ENCODE measurements at regions of chr10 and their contacts with region 1.

Region 1: DNA sequence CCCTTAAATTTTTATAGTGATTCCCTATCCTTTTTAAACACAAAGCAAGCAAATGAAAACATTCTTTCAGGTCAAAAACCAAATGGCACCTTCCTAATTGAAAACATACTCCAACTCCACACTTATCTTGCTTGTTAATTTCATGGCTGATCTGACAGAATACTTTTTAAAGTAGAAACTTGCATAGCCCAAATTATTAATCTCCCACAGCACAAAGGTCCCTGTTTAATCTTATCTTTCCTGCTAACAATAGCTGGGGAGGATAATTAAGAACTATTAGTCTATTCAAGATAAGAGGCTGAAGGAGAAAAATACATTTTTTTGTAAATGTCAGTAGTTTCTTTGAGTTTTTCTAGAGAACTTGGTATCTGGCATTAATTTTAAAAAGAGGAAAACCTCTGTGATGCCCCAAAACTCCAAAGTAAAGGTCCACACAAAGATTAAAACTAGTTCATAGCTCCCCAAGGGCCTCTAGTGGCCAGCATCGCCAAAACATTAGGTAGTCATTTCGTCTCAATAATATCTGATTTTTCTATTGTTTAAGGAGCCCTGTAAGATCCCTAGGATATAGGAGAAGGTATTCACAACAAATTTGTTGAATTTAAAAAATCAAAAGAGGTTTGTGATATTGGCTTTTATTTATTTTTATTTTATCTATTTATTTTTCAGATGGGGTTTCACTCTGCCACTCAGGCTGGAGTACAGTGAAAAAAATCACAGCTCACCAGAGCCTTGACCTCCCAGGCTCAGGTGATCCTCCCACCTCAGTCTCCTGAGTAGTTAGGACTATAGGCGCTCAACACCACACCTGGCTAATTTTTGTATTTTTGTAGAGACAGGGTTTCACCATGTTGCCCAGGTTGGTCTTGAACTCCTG is 14.7 kb downstream of the CDNF start:
- DNase-seq: no peak
- ATAC-seq: peak; percentile 74
- H3K4me3 Mint-ChIP-seq: no peak overlapping the region
- H3K27ac Mint-ChIP-seq: peak overlapping the region; percentile 26
- H3K4me1 Mint-ChIP-seq: peaks cover 24% of the 10 kb centered on the region
- H3K27me3 Mint-ChIP-seq: no peaks in the 10 kb centered on the region
- CTCF ChIP-seq: peak; percentile 25

Region 2: DNA sequence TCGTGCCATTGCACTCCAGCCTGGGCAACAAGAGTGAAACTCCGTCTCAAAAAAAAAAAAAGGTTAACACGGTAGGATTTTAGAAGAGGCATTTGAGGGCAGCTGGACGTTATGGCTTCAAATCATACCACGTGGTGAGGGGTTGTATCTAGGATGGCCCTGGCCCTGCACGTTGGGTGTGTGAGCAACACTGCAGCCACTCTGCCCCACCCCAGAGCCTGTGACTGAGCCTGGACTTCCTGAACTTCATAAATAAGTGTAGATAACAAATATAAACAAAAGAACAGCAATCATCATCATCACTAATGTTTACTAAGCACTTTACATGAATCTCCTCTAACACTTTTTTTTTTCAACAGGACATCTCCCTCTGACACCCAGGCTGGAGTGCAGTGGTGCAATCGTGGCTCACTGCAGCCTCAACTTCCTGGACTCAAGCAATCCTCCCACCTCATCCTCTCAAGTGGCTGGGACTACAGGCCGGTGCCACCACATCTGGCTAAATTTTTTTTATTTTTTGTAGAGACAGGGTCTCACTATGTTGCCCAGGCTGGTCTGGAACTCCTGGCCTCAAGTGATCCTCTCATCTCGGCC is 322.8 kb before region 1 on chr10:
- CTCF ChIA-PET with region 1: interaction called, 11 read pairs
- POLR2A ChIA-PET with region 1: interaction called, 3 read pairs
- intact Hi-C with region 1: loop called (anchors 1 kb)
- DNase-seq: no peak
- ATAC-seq: no peak
- H3K4me3 Mint-ChIP-seq: no peak overlapping the region
- H3K27ac Mint-ChIP-seq: no peak overlapping the region
- H3K4me1 Mint-ChIP-seq: peaks cover 18% of the 10 kb centered on the region
- H3K27me3 Mint-ChIP-seq: no peaks in the 10 kb centered on the region
- CTCF ChIP-seq: no peak

Region 3: GRCh38 chr10:14543046-14543903 is 279.8 kb before region 1 on chr10:
- CTCF ChIA-PET with region 1: interaction called, 34 read pairs
- POLR2A ChIA-PET with region 1: interaction called, 3 read pairs
- intact Hi-C with region 1: no loop called
- DNase-seq: no peak
- ATAC-seq: peak; percentile 63
- H3K4me3 Mint-ChIP-seq: peak overlapping the region; percentile 53
- H3K27ac Mint-ChIP-seq: peak overlapping the region; percentile 75
- H3K4me1 Mint-ChIP-seq: peaks cover 76% of the 10 kb centered on the region
- H3K27me3 Mint-ChIP-seq: no peaks in the 10 kb centered on the region
- CTCF ChIP-seq: no peak

Region 4: DNA sequence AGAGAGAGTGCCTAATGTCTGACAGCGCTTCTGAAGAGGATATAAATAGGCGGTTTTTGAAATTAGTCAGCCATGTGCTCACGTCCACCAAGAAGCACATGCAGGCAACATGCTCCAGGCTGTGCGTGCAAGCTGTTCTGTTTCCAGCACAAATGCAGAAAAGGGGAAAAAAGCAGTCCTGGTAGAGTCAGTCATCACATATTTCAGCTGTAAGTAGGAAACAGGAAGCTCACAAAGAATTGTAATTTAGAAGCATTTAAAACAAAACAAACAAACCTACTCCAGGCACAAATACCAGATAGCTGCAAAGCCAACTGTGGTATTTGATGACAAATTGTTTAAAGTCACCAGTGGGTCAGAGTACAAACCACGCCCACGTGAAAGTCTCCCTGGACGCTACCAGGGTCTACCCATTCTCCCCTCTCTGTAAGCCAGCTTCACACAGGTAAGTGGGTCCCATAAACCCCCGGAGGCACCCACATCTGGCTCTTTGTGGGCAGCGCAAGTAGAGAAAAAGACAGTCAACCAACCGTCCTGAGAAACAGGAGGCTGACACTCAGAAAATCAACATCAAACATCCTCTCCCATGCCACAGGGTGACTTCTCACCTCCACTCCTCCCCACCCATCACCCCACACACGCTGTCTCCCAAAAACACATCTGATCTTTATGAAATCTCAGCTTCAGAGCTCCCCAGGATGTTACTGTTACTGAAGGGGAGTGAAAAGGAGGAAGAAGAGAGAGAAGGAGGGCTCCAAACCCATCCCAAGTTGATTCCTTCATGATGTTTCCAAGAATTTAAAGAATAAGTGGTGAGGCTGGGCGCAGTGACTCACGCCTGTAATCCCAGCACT is 234.8 kb before region 1 on chr10:
- CTCF ChIA-PET with region 1: interaction called, 5 read pairs
- POLR2A ChIA-PET with region 1: no interaction called
- intact Hi-C with region 1: loop called (anchors 5 kb)
- DNase-seq: no peak
- ATAC-seq: peak; percentile 61
- H3K4me3 Mint-ChIP-seq: peak overlapping the region; percentile 65
- H3K27ac Mint-ChIP-seq: peak overlapping the region; percentile 89
- H3K4me1 Mint-ChIP-seq: peaks cover 92% of the 10 kb centered on the region
- H3K27me3 Mint-ChIP-seq: no peaks in the 10 kb centered on the region
- CTCF ChIP-seq: no peak

Region 5: GRCh38 chr10:14648005-14648765 is 174.9 kb before region 1 on chr10:
- CTCF ChIA-PET with region 1: interaction called, 13 read pairs
- POLR2A ChIA-PET with region 1: no interaction called
- intact Hi-C with region 1: loop called (anchors 1 kb)
- DNase-seq: peak; percentile 56
- ATAC-seq: peak; percentile 79
- H3K4me3 Mint-ChIP-seq: peak overlapping the region; percentile 75
- H3K27ac Mint-ChIP-seq: peak overlapping the region; percentile 98
- H3K4me1 Mint-ChIP-seq: peaks cover 80% of the 10 kb centered on the region
- H3K27me3 Mint-ChIP-seq: no peaks in the 10 kb centered on the region
- CTCF ChIP-seq: no peak

Region 6: GRCh38 chr10:14742815-14743214 is 80.3 kb before region 1 on chr10:
- CTCF ChIA-PET with region 1: interaction called, 5 read pairs
- POLR2A ChIA-PET with region 1: interaction called, 3 read pairs
- intact Hi-C with region 1: loop called (anchors 1 kb)
- DNase-seq: no peak
- ATAC-seq: peak; percentile 83
- H3K4me3 Mint-ChIP-seq: peak overlapping the region; percentile 64
- H3K27ac Mint-ChIP-seq: peak overlapping the region; percentile 89
- H3K4me1 Mint-ChIP-seq: peaks cover 96% of the 10 kb centered on the region
- H3K27me3 Mint-ChIP-seq: no peaks in the 10 kb centered on the region
- CTCF ChIP-seq: no peak

Measured in activated B cell treated with CpG ODN at 0.5 μM for 24 hours (primary cell).